A549 (cell line): ENCODE measurements at regions of chr14 and their contacts with region 1.

Region 1: DNA sequence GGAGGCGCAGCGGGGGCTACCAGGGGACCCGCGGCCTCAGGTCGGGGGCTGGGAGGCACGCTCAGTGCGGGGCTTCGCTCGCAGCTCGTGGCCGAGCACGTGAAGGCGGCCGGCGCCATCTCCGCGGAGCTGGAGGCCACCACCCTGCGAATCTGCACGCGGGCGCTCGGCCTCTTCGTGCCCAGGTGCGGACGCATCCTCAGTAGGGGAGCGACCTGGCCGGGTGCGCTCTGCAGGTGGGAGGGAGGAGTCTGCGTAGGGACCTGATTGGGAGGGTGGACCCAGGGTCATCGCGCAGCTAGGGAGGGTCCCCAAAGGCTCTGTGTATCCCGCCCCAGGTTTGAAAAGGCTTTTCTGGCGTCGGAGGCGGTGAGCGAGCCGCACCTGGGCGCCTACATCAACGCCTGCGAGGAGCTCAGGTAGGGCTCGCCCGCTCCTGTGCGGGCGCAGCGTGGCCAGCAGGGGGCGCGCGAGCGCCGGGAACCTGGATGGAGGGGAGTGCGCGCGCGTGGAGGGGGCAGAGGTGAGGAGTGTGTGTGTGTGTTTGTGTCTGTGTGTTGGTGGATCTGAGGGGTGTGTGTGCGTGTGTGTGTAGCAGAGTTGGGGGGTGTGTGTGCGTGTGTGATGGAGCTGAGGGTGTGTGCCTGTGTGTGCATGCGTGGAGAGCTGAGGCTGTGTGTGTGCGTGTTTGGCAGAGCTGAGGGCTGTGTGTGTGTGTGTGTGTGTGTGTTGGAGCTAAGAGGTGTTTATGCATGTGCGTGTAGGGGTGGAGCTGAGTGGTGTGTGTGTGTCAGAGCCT is 10.3 kb downstream of the EXOC3L4 start:
- DNase-seq: peak in 1 of 2 experiments; percentile 81
- ATAC-seq: peak; percentile 37 to 71
- H3K4me3 ChIP-seq: peak overlapping the region; percentile 42
- H3K27ac ChIP-seq: peak overlapping the region; percentile 94
- H3K4me1 ChIP-seq: peaks cover 74% of the 10 kb centered on the region
- CTCF ChIP-seq: peak; percentile 94
- EP300 ChIP-seq: no peak
- POLR2A ChIP-seq: no peak
- RAD21 ChIP-seq: peak; percentile 92 to 98

Region 2: DNA sequence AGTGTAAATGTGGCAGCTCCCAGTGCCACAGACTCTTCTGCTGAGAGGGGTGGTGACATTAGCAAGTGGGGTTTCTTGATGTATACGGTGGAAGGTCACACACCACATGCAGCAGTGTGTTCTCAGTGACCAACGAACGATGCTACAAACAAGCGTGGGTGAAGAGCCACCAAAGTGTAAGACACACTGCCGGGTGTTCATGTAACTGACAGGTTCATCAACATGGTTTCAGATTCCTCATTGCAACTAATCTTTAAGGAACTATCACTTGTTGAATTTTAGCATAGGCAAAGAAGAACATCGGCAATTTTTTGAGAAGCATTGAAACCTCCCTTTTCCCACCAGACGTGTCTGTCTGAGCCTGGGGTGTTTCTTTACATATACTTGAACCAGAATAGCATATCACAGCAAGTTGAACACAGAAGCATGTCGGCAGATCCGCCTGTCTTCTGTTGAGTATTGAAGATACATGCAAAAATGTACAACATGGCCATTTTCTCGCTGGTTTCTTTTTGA is 1284.5 kb before region 1 on chr14:
- CTCF ChIA-PET with region 1: no interaction called
- POLR2A ChIA-PET with region 1: no interaction called
- DNase-seq: no peak
- ATAC-seq: no peak
- H3K4me3 ChIP-seq: no peak overlapping the region
- H3K27ac ChIP-seq: no peak overlapping the region
- H3K4me1 ChIP-seq: no peaks in the 10 kb centered on the region
- CTCF ChIP-seq: no peak
- EP300 ChIP-seq: no peak
- POLR2A ChIP-seq: no peak
- RAD21 ChIP-seq: no peak

Region 3: DNA sequence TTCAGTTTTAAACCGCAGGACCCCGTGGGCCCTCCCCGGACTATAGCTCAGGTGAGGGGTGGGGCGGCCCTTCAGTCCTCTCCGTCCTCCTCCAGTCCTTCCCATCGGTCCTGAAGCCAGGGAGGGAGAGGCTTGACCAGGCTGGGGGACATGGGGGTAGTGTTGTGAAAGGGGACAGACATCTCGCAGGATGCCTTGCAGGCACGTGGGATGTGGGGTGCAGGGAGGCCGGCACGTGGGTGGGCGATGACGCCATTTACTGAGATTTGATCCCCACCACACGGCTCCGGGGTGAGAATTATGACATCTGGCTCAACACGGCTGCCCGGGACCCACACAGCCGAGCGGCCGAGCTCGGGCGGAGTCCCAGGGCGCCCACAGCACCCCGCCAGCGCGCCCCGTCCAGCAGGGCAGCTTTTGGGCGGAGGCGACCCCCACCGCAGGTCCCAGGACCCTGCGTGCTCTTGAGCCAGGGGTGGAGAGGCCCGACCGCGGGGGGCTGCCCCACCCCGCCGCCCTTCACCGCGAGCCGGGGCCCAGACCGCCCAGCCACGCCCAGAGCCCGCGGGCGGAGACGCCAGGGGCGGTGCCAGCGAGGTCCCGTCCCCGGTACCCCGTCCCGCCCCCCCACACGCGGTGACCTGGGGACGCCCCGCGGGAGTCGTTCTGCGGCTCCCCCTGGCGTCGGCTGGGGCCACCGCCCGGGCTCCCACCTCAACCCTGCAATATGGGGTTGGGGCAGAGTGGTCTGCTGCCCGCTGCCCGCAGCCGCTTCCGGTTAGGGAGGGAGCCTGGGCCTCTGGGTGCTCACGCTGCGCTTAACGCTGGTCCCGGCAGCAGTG is 13.6 kb before region 1 on chr14:
- CTCF ChIA-PET with region 1: interaction called, 86 read pairs
- POLR2A ChIA-PET with region 1: interaction called, 3 read pairs
- DNase-seq: peak in 1 of 2 experiments; percentile 88
- ATAC-seq: peak; percentile 76 to 80
- H3K4me3 ChIP-seq: peak overlapping the region; percentile 52
- H3K27ac ChIP-seq: peak overlapping the region; percentile 88 to 98
- H3K4me1 ChIP-seq: peaks cover 21% of the 10 kb centered on the region
- CTCF ChIP-seq: peak; percentile 67
- EP300 ChIP-seq: no peak
- POLR2A ChIP-seq: no peak; the same call in 1 of the 2 replicates
- RAD21 ChIP-seq: peak; percentile 22 to 69; a peak in 4 of 5 replicates

Region 4: DNA sequence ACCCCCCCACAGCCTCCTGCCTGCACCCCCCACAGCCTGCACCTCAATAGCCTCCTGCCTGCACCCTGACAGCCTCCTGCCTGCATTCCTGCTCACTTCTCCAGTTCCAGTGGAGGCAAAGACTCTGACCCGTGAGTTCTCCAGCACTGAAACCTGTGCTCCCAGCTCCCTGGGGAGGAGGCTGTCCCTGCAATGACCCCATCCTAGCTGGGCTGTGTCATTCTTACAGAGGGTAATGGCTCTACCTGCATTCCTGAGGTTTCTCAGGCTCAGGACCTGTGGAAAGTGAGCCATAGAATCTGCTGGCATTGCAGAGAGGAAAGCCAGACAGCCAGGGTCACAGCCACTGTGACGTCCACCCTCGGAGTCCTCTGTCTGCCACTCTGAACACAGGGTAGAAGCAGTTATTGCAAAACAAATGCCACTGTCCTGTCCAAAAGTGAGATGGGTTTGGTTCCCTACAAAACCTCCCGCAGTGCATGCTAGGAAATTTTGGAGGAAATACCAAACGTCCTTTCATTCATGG is 56.1 kb after region 1 on chr14:
- CTCF ChIA-PET with region 1: interaction called, 57 read pairs
- POLR2A ChIA-PET with region 1: no interaction called
- DNase-seq: no peak
- ATAC-seq: no peak
- H3K4me3 ChIP-seq: no peak overlapping the region
- H3K27ac ChIP-seq: peak overlapping the region in 1 of 2 experiments; percentile 1; a peak in 2 of 6 replicates
- H3K4me1 ChIP-seq: peaks cover 2% of the 10 kb centered on the region
- CTCF ChIP-seq: no peak
- EP300 ChIP-seq: no peak
- POLR2A ChIP-seq: no peak
- RAD21 ChIP-seq: no peak

Region 5: DNA sequence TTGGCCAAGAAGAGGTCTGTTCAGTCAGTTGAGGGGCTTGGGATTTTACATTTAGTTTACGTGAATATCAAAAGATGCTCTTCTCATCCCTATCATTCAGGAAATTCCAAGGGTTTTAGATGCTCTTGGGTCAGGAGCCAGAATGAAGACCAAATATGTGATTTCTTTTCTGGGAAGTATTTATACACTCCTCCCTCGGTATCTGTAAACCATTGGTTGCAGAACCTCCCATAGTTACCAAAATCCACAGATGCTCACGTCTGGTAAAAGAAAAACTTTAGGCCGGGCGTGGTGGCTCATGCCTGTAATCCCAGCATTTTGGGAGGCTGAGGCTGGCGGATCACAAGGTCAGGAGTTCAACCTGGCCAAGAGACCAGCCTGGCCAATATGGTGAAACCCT is 94.3 kb after region 1 on chr14:
- CTCF ChIA-PET with region 1: interaction called, 10 read pairs
- POLR2A ChIA-PET with region 1: no interaction called
- DNase-seq: peak in 1 of 2 experiments; percentile 42
- ATAC-seq: peak; percentile 44 to 60; a peak in 5 of 6 replicates
- H3K4me3 ChIP-seq: no peak overlapping the region
- H3K27ac ChIP-seq: peak overlapping the region; percentile 67 to 85
- H3K4me1 ChIP-seq: peaks cover 23% of the 10 kb centered on the region
- CTCF ChIP-seq: no peak
- EP300 ChIP-seq: 0 out of 5 replicates have a peak, but pooled peaks of 1 of the 2 experiments have one; percentile 6
- POLR2A ChIP-seq: no peak
- RAD21 ChIP-seq: no peak

Region 6: GRCh38 chr14:103273145-103273744 is 168.4 kb after region 1 on chr14:
- CTCF ChIA-PET with region 1: interaction called, 19 read pairs
- POLR2A ChIA-PET with region 1: no interaction called
- DNase-seq: no peak
- ATAC-seq: no peak
- H3K4me3 ChIP-seq: no peak overlapping the region
- H3K27ac ChIP-seq: no peak overlapping the region
- H3K4me1 ChIP-seq: no peaks in the 10 kb centered on the region
- CTCF ChIP-seq: no peak
- EP300 ChIP-seq: no peak
- POLR2A ChIP-seq: no peak
- RAD21 ChIP-seq: no peak

Region 7: GRCh38 chr14:103391048-103391447 is 286.2 kb after region 1 on chr14:
- CTCF ChIA-PET with region 1: interaction called, 24 read pairs
- POLR2A ChIA-PET with region 1: no interaction called
- DNase-seq: peak; percentile 41 to 74
- ATAC-seq: peak; percentile 70 to 78
- H3K4me3 ChIP-seq: no peak overlapping the region
- H3K27ac ChIP-seq: no peak overlapping the region
- H3K4me1 ChIP-seq: peaks cover 50% of the 10 kb centered on the region
- CTCF ChIP-seq: peak; percentile 98
- EP300 ChIP-seq: no peak
- POLR2A ChIP-seq: no peak
- RAD21 ChIP-seq: peak; percentile 59 to 70